Activated naive CD4-positive, alpha-beta T cell treated with anti-CD3 and anti-CD28 coated beads for 36 hours (primary cell): ENCODE measurements at regions of chr15 and their contacts with region 1.

Region 1: DNA sequence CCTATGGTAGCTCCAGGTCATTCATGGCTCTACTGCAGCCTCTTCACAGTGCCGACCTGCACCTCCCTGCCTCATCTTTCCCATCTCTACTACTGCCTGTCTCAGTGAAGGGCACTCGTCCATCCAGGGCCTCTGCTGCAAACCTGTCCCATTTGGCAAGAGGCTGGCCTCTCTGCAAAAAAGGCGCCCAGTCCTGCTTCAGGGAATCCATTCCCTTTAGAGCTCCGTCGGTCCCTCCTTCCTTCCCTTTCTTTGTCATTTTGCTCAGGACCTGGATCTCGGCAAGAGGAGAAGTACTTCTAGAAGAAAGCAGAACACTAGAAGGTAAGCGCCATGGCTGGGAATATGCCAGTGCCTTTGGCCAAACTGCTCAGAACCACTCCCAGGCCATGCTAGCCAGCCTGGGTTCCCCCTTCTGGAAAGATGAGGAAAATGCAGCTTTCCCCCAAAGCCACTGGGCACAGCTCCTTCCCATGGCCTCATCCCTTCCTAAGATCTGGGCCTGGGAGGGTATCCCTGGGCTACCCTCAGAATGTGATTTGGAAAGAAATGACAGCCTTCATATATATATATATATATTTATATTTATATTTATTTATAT is 6.4 kb upstream of the ISL2 start:
- DNase-seq: no peak
- H3K4me3 Mint-ChIP-seq: no peak overlapping the region
- H3K27ac Mint-ChIP-seq: no peak overlapping the region
- H3K4me1 Mint-ChIP-seq: peaks cover 2% of the 10 kb centered on the region
- H3K27me3 Mint-ChIP-seq: peaks cover 54% of the 10 kb centered on the region

Region 2: DNA sequence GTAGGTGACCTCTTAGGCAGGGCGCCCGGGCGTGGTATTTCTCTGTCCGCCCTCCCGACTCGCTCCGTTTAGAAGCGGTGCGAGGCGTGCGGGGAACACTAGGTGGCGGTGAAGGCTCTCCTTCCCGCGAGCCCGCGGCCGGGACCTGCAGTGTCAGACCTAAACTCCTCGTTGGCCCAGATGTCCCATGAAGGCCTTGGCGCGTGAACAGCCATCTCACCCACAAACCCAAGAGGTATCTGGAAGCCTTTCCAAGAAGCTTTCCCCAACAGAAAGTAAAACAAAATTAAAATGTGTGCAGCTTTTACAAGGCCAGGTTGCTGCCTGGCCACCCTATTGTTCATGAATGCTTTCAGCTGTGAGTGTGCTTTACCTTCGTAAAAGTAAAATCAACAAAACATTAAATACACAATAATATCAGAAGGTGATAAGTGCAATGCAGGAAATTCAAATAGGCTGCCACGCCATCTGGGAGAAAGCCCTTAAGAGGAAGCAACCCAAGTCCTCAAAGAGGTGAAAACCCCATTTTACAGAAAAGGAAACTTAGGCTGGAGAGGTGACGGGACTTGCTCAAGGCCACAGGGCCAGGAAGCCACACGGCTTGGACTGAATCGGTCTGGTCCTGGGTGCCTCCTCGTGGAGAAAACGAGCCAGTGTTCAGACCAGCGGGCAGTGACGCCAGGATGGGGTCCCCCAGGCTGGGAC is 139.2 kb before region 1 on chr15:
- CTCF ChIA-PET with region 1: interaction called, 4 read pairs
- intact Hi-C with region 1: loop called (anchors 2 kb)
- DNase-seq: peak; percentile 83
- H3K4me3 Mint-ChIP-seq: no peak overlapping the region
- H3K27ac Mint-ChIP-seq: no peak overlapping the region
- H3K4me1 Mint-ChIP-seq: peaks cover 13% of the 10 kb centered on the region
- H3K27me3 Mint-ChIP-seq: peaks cover 56% of the 10 kb centered on the region